Ovary (tissue), 10 donors: ENCODE measurements at regions of chr21 and their contacts with region 1.

Region 1: DNA sequence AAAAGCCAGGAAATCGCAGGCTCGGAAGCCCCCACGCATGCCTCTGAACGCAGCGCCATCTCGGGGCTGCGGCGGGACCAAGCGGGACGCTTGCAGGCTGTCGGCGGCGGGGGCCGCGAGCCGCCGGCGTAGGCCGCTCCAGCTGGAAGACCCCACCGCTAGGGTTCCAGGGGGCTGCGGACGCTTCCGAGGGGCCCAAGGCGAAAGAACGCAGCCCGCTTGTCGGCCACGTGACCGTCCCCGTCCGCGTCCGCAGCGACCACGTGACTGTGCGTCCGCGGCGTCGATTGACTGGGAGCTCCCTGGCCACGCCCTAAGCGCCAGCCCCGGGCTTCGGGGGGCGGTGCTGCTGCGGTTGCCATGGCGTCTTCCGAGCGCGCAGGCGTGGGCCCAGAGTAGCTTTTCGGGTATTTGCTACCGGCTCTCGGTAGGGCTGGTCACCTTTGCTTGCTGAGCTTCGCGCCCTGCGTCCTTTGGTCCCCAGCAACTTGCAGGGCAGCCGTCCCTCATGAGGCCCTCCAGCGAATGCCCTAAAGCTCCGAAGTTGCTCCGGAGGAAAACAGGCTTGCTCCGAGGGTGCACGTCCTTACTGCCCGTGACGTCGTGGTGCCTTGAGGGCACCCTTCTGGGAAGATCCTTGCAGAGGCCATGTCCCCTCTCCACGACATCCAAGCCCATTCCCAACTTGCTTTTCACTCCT is 197.2 kb downstream of the DYRK1A start:
- DNase-seq: peak; percentile 89 to 95 (median 92)
- H3K4me3 ChIP-seq: peak overlapping the region; percentile 42
- H3K27ac ChIP-seq: peak overlapping the region; percentile 33 to 88
- H3K4me1 ChIP-seq: peaks cover 4% of the 10 kb centered on the region
- H3K27me3 ChIP-seq: no peaks in the 10 kb centered on the region
- CTCF ChIP-seq: peak in 2 of 3 donors; percentile 47 to 58
- EP300 ChIP-seq: no peak
- POLR2A ChIP-seq: peak; percentile 57

Region 2: DNA sequence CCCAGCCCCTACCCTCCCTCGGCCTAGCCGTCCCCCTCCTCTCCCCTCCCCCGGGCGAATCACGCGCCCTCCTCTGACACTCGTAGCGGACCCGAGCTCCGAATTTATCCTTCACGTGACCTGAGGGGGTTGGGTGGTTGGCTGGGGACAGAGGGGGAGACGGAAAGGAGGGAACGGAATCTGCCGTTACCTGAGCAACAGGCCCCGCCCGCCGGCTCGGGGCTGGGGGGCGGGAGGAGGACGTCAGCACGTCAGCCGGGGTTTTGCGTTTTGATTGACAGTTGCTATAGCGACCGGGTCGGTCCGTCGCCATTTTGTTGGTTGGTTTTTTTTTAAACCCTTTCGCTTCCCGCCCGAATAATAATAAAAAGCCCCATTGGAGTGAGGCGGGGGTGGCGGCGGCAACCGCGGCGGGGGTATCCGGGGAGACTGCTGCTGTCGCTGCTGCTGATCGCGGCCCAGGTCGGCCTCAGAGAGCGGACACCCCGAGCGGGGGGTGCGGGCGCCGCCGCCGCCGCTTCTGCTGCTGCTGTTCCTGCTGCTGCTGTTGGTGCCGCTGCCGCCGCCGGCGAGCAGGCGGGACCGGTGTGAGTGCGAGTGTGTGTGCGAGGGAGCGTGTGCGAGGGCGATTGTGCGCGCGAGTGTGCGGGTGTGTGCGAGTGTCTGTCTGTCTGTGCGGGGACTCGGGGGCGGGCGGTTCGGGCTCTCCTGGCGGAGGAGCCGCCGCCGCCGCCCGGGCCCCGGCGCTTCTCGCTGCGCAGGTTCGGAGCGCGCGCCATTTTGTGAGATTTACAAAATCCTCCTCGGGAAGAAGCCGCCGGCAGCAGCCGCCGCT is 197.1 kb before region 1 on chr21 and contains the start of gene DYRK1A:
- intact Hi-C with region 1: loop called in 1 of 4 experiments (anchors 5 kb)
- DNase-seq: peak; percentile 99
- H3K4me3 ChIP-seq: peak within 1 kb of the TSS; percentile 99
- H3K27ac ChIP-seq: peak within 1 kb of the TSS; percentile 99 to 100
- H3K4me1 ChIP-seq: no peaks in the 10 kb centered on the region
- H3K27me3 ChIP-seq: no peaks in the 10 kb centered on the region
- CTCF ChIP-seq: peak in 1 of 3 donors; percentile 17
- EP300 ChIP-seq: peak; percentile 93
- POLR2A ChIP-seq: peak; percentile 31
- total RNA-seq, gene DYRK1A: 65.5 to 89.0 (median 77.5) TPM

Region 3: DNA sequence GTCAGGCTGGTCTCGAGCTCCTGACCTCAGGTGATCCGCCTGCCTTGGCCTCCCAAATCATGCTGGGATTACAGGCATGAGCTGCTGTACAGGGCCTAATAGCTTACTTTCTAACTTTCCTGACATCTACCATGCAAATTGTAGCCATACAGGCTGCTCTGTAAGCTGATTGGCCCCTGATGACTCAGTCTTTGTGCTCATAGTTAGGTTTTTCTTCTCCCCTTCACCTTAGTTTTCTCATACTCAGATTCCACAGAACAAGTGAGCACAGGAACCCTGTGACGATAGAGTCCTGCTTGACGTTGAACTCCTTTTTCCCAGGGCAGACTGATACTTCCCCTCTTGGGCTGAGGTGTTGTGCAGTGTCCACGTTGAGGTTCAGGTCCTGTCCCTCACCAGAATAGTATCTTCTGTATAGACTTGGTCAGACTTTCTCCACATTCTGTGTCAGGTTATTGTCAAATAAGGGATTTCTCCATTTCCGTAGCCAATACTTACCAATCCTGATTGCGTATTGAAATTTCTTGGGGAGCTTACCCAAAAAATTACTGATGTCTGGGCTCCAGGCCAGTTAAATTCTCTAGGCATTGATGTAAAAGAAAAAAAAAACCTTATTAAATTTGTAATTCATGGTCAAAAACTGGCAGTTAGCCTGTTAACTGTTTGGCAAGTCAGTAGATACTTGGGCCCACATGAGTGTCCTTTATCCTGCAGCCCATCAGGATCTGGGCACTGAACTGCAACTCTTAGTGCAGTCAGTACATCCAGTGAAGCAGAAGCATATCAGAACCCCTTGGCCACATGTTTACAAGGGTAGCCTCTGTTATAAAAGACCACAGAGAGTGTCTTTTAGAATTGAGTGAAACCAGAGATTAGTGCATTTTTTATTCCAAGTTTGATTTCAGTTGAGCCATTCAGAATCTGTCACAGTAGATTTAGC is 79.0 kb before region 1 on chr21:
- intact Hi-C with region 1: loop called in 1 of 4 experiments (anchors 2 kb)
- DNase-seq: no peak
- H3K4me3 ChIP-seq: no peak overlapping the region
- H3K27ac ChIP-seq: no peak overlapping the region
- H3K4me1 ChIP-seq: no peaks in the 10 kb centered on the region
- H3K27me3 ChIP-seq: no peaks in the 10 kb centered on the region
- CTCF ChIP-seq: no peak
- EP300 ChIP-seq: no peak
- POLR2A ChIP-seq: no peak